Activated CD4-positive, alpha-beta T cell treated with anti-CD3 and anti-CD28 coated beads for 36 hours (primary cell): ENCODE measurements at regions of chr1 and their contacts with region 1.

Region 1: DNA sequence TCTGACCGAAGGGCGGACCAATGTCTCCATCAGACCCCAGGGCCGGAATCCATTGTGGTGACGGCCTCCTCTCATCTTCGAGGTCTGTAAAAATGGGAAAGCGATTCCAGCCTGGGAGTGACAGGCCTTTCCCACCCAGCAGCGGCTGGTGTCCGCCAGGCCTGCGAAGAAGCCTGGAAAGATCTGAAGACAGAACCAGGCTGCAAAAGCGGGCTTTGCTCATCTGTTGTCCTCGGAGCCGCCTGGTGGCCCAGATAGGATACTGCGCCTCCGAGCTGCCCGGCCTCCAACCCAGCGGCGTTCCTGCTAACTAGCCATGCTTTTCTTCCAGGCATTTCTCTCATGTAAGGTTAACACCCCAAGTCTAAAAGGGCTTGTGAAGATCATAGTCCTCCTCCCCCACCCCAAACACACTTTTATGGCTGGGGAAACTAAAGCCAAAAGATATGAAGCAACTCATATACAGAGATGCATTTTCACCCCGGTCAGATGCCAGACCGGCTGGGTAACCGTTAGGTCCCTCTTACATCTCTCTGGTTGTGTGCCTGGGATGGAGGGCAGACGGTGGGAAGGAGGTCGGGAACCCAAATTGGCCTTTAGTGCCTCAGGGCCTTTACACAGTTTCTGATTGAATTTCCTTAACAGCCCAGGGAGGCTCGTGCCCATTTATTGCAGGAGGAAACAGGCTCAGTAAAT is 1.9 kb upstream of the DHRS3 start:
- DNase-seq: peak; percentile 88
- ATAC-seq: peak; percentile 39
- H3K4me3 Mint-ChIP-seq: peak overlapping the region; percentile 95
- H3K27ac Mint-ChIP-seq: no peak overlapping the region
- H3K4me1 Mint-ChIP-seq: peaks cover 43% of the 10 kb centered on the region
- H3K27me3 Mint-ChIP-seq: no peaks in the 10 kb centered on the region

Region 2: GRCh38 chr1:12229835-12230548 is 389.9 kb before region 1 on chr1 and contains the start of gene VPS13D:
- CTCF ChIA-PET with region 1: no interaction called
- POLR2A ChIA-PET with region 1: no interaction called
- intact Hi-C with region 1: loop called (anchors 1 to 5 kb)
- DNase-seq: peak; percentile 93
- ATAC-seq: peak; percentile 92
- H3K4me3 Mint-ChIP-seq: peak within 1 kb of the TSS; percentile 83
- H3K27ac Mint-ChIP-seq: peak within 1 kb of the TSS; percentile 47
- H3K4me1 Mint-ChIP-seq: peaks cover 23% of the 10 kb centered on the region
- H3K27me3 Mint-ChIP-seq: no peaks in the 10 kb centered on the region
- total RNA-seq, gene VPS13D: 20.6 to 22.9 TPM

Region 3: GRCh38 chr1:12296623-12297022 is 323.3 kb before region 1 on chr1:
- CTCF ChIA-PET with region 1: interaction called, 8 read pairs
- POLR2A ChIA-PET with region 1: interaction called, 5 read pairs
- intact Hi-C with region 1: loop called (anchors 1 to 5 kb)
- DNase-seq: no peak
- ATAC-seq: peak; percentile 90
- H3K4me3 Mint-ChIP-seq: no peak overlapping the region
- H3K27ac Mint-ChIP-seq: no peak overlapping the region
- H3K4me1 Mint-ChIP-seq: peaks cover 22% of the 10 kb centered on the region
- H3K27me3 Mint-ChIP-seq: no peaks in the 10 kb centered on the region

Region 4: GRCh38 chr1:12344596-12345349 is 275.2 kb before region 1 on chr1:
- CTCF ChIA-PET with region 1: no interaction called
- POLR2A ChIA-PET with region 1: no interaction called
- intact Hi-C with region 1: loop called in 1 of 2 experiments (anchors 1 kb)
- DNase-seq: peak; percentile 58
- ATAC-seq: peak; percentile 68
- H3K4me3 Mint-ChIP-seq: peak overlapping the region; percentile 63
- H3K27ac Mint-ChIP-seq: peak overlapping the region; percentile 93
- H3K4me1 Mint-ChIP-seq: peaks cover 61% of the 10 kb centered on the region
- H3K27me3 Mint-ChIP-seq: no peaks in the 10 kb centered on the region

Region 5: GRCh38 chr1:12448746-12449177 is 171.2 kb before region 1 on chr1:
- CTCF ChIA-PET with region 1: interaction called, 5 read pairs
- POLR2A ChIA-PET with region 1: interaction called, 3 read pairs
- intact Hi-C with region 1: loop called (anchors 1 kb)
- DNase-seq: no peak
- ATAC-seq: no peak
- H3K4me3 Mint-ChIP-seq: peak overlapping the region; percentile 24
- H3K27ac Mint-ChIP-seq: peak overlapping the region; percentile 76
- H3K4me1 Mint-ChIP-seq: peaks cover 69% of the 10 kb centered on the region
- H3K27me3 Mint-ChIP-seq: peaks cover 10% of the 10 kb centered on the region

Region 6: DNA sequence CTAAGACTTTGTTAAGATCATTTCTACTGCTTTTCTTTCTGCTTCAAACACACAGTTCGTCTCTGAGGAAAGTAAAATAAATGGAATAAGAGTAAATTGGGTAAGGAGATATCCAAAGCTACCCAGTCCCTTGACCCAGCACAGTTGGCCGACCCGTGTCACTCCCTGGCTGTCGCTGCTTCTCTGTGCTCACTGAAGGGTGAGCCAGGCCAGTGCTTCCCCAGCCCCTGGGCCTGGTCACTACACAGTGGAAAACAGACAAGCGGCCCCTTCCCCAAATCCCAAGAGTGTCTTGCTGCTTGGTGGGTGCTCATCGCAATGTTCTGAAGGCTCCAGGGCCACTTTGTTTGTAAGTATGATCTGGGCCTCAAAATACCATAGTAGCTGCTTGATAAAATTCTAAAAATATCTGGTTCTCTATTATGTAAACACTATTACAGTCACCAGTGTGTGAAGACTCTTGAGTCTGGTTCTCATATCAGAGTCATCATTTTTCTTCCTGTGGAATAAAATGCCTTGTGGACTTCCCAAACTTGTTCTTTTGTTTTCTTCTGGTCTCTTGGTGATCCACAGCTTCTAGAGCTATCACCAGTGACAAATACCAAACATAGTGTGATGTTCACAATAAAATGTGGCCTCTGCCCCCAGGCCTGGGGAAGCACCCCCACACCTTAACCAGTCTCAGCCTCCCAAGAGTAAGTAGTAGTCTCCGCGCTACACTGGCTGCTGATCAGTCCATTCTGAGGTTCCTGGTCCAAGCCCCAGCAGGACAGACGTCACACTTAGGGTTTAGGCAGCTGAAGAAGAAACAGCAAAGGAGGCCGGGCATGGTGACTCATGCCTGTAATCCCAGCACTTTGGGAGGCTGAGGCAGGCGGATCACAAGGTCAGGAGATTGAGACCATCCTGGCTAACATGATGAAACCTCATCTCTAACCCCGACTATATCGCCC is 108.1 kb before region 1 on chr1:
- CTCF ChIA-PET with region 1: interaction called, 5 read pairs
- POLR2A ChIA-PET with region 1: interaction called, 7 read pairs
- intact Hi-C with region 1: loop called (anchors 1 to 2 kb)
- DNase-seq: no peak
- ATAC-seq: no peak
- H3K4me3 Mint-ChIP-seq: peak overlapping the region; percentile 58
- H3K27ac Mint-ChIP-seq: peak overlapping the region; percentile 99
- H3K4me1 Mint-ChIP-seq: peaks cover 54% of the 10 kb centered on the region
- H3K27me3 Mint-ChIP-seq: no peaks in the 10 kb centered on the region

Region 7: GRCh38 chr1:12604114-12604874 is 15.6 kb before region 1 on chr1:
- CTCF ChIA-PET with region 1: interaction called, 68 read pairs
- POLR2A ChIA-PET with region 1: interaction called, 4 read pairs
- intact Hi-C with region 1: loop called (anchors 1 kb)
- DNase-seq: peak; percentile 85
- ATAC-seq: peak; percentile 97
- H3K4me3 Mint-ChIP-seq: peak overlapping the region; percentile 21
- H3K27ac Mint-ChIP-seq: peak overlapping the region; percentile 74
- H3K4me1 Mint-ChIP-seq: peaks cover 49% of the 10 kb centered on the region
- H3K27me3 Mint-ChIP-seq: no peaks in the 10 kb centered on the region

Region 8: GRCh38 chr1:12760256-12760795 is 140.4 kb after region 1 on chr1:
- CTCF ChIA-PET with region 1: no interaction called
- POLR2A ChIA-PET with region 1: no interaction called
- intact Hi-C with region 1: no loop called
- DNase-seq: no peak
- ATAC-seq: no peak
- H3K4me3 Mint-ChIP-seq: no peak overlapping the region
- H3K27ac Mint-ChIP-seq: no peak overlapping the region
- H3K4me1 Mint-ChIP-seq: no peaks in the 10 kb centered on the region
- H3K27me3 Mint-ChIP-seq: peaks cover 11% of the 10 kb centered on the region